ENCODE measurements at regions of chr12 and their contacts with region 1.

Region 1: GRCh38 chr12:27821259-27821973 is 41.4 kb upstream of the MANSC4 start:
- DNase-seq: peak in 4 of 5 donors; percentile 41 to 49 (median 46)
- H3K4me3 ChIP-seq: peak overlapping the region; percentile 9 to 34
- H3K4me3 Mint-ChIP-seq: peak overlapping the region; percentile 71 to 89 (median 83)
- H3K27ac ChIP-seq: no peak overlapping the region
- H3K27ac Mint-ChIP-seq: peak overlapping the region; percentile 67 to 94 (median 84)
- H3K4me1 ChIP-seq: peaks cover 34% of the 10 kb centered on the region
- H3K4me1 Mint-ChIP-seq: peaks cover 23 to 35% (median 29%) of the 10 kb centered on the region in 4 donors
- H3K27me3 ChIP-seq: no peaks in the 10 kb centered on the region
- H3K27me3 Mint-ChIP-seq: no peaks in the 10 kb centered on the region

Region 2: DNA sequence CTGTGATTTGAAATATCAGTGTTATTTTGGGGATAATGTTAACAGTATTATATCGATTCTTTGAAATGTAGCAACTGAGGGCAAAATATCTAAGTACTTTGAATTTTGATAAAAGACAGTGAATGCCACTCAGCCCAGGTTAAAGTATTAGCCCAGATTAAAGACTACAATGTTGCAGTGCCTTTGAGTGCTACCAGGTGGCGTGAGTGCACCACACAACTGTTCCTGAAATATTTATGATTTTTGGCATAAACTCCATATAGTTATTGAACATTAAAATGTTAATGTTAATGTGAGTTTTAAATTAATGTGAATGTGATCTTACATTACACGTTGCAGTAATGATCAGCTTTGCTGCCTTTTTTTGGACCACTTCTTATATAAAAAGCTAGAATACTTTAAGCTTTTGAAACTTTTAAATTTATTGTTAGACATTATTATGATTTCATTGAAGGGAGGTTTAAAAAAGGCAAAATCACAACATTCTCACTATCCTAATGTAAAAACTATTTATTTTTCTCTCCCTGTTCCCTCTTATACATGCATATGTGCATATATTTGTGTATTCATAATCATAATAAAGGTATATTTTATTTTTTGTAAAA is 88.3 kb before region 1 on chr12:
- CTCF ChIA-PET with region 1: interaction called, 63 read pairs
- POLR2A ChIA-PET with region 1: no interaction called
- intact Hi-C with region 1: loop called (anchors 1 kb)
- DNase-seq: peak in 4 of 5 donors; percentile 24 to 42 (median 34)
- H3K4me3 ChIP-seq: no peak overlapping the region
- H3K4me3 Mint-ChIP-seq: no peak overlapping the region
- H3K27ac ChIP-seq: no peak overlapping the region
- H3K27ac Mint-ChIP-seq: no peak overlapping the region
- H3K4me1 ChIP-seq: no peaks in the 10 kb centered on the region
- H3K4me1 Mint-ChIP-seq: peaks cover 0 to 7% (median 0%) of the 10 kb centered on the region in 4 donors
- H3K27me3 ChIP-seq: no peaks in the 10 kb centered on the region
- H3K27me3 Mint-ChIP-seq: no peaks in the 10 kb centered on the region

Region 3: DNA sequence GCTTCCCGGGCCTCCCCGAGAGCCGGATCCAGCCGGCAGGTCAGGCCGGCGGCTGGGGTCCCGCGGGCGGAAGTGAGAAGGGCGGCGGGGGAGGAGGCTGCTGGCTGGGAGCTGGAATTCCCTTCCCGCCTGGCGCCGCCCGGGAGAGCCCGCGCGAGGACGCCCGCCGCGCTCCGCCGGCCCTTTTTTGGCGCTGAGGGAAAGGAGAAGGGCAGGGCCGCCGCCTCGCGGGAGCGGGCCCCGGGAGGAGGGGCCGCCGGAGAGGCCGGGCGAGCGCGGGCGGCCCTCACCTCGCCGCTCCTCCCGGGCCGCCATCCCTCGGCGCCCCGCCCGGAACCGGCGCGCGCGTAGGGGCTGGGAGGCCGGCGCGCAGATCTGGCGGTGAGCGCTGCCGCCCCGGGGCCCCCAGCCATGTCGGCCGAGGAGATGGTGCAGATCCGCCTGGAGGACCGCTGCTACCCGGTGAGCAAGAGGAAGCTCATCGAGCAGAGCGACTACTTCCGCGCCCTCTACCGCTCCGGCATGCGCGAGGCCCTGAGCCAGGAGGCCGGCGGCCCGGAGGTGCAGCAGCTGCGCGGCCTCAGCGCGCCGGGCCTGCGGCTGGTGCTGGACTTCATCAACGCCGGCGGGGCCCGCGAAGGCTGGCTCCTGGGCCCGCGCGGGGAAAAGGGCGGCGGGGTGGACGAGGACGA is 41.4 kb before region 1 on chr12 and contains the starts of genes KLHL42 and MANSC4:
- CTCF ChIA-PET with region 1: interaction called, 12 read pairs
- POLR2A ChIA-PET with region 1: interaction called, 23 read pairs
- intact Hi-C with region 1: loop called (anchors 1 kb)
- DNase-seq: peak; percentile 62 to 75 (median 72)
- H3K4me3 ChIP-seq: peak within 1 kb of the TSS; percentile 73 to 74
- H3K4me3 Mint-ChIP-seq: peak within 1 kb of the TSS; percentile 86 to 94 (median 90)
- H3K27ac ChIP-seq: peak within 1 kb of the TSS; percentile 62
- H3K27ac Mint-ChIP-seq: peak within 1 kb of the TSS; percentile 84 to 97 (median 87)
- H3K4me1 ChIP-seq: peaks cover 26% of the 10 kb centered on the region
- H3K4me1 Mint-ChIP-seq: peaks cover 28 to 40% (median 34%) of the 10 kb centered on the region in 4 donors
- H3K27me3 ChIP-seq: no peaks in the 10 kb centered on the region
- H3K27me3 Mint-ChIP-seq: no peaks in the 10 kb centered on the region
- total RNA-seq, gene KLHL42: 19.4 to 20.5 TPM
- total RNA-seq, gene MANSC4: not detected

Region 4: DNA sequence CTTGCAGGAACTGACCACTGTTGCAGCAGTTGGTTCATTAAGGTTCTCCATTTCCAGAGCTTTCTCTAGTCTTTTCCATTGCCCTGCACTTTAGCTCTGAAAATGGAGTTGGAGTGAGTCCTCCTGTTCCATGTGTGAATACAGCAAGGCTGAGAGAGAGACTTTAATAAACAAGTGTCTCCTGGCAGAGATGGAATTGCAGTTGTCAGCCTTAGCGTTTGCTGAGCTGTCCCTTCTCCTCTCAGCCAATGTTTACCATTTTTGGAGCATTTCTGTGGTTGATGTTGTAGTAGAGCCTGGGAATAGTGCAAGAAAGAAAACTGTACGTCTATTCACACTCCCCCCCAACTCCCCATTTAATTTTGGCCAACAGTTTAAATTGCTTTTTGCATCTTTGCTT is 33.9 kb before region 1 on chr12:
- CTCF ChIA-PET with region 1: interaction called, 12 read pairs
- POLR2A ChIA-PET with region 1: no interaction called
- intact Hi-C with region 1: no loop called
- DNase-seq: no peak
- H3K4me3 ChIP-seq: no peak overlapping the region
- H3K4me3 Mint-ChIP-seq: no peak overlapping the region
- H3K27ac ChIP-seq: no peak overlapping the region
- H3K27ac Mint-ChIP-seq: no peak overlapping the region
- H3K4me1 ChIP-seq: peaks cover under 1% of the 10 kb centered on the region
- H3K4me1 Mint-ChIP-seq: peaks cover 22 to 43% (median 33%) of the 10 kb centered on the region in 4 donors
- H3K27me3 ChIP-seq: no peaks in the 10 kb centered on the region
- H3K27me3 Mint-ChIP-seq: no peaks in the 10 kb centered on the region

Region 5: DNA sequence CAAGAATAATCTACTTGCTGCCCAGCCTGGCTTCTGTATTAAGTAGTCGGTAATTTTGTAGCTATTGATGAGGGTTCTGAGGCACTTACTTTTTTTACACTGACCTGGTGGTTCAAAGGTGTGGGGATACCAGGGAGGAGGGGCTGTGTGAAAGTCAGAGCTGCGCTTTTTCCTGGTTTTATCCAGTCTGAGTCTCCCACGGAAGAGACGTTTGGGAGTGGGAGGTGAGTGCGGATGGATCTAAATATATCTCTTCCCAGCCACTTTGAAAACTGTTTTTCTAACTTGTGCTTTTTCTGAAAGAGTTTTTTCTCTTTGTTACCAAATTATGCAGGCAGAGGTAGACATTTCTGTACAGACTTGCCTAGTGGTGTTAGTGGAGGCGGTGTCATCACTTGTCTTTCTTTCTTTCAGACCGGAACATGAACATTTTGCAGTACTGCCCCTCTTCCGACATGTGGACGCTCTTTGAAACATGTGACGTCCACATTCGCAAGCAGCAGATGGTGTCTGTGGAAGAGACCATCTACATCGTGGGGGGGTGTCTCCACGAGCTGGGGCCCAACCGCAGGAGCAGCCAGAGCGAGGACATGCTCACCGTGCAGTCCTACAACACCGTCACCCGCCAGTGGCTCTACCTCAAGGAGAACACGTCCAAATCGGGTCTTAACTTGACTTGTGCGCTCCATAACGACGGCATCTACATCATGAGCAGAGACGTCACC is 24.0 kb before region 1 on chr12:
- CTCF ChIA-PET with region 1: interaction called, 17 read pairs
- POLR2A ChIA-PET with region 1: no interaction called
- intact Hi-C with region 1: no loop called
- DNase-seq: no peak
- H3K4me3 ChIP-seq: no peak overlapping the region
- H3K4me3 Mint-ChIP-seq: no peak overlapping the region
- H3K27ac ChIP-seq: no peak overlapping the region
- H3K27ac Mint-ChIP-seq: no peak overlapping the region
- H3K4me1 ChIP-seq: peaks cover 9% of the 10 kb centered on the region
- H3K4me1 Mint-ChIP-seq: peaks cover 9 to 25% (median 20%) of the 10 kb centered on the region in 4 donors
- H3K27me3 ChIP-seq: no peaks in the 10 kb centered on the region
- H3K27me3 Mint-ChIP-seq: no peaks in the 10 kb centered on the region

Region 6: GRCh38 chr12:27805238-27805637 is 16.2 kb before region 1 on chr12:
- CTCF ChIA-PET with region 1: interaction called, 17 read pairs
- POLR2A ChIA-PET with region 1: no interaction called
- intact Hi-C with region 1: no loop called
- DNase-seq: no peak
- H3K4me3 ChIP-seq: no peak overlapping the region
- H3K4me3 Mint-ChIP-seq: no peak overlapping the region
- H3K27ac ChIP-seq: no peak overlapping the region
- H3K27ac Mint-ChIP-seq: no peak overlapping the region
- H3K4me1 ChIP-seq: peaks cover 12% of the 10 kb centered on the region
- H3K4me1 Mint-ChIP-seq: peaks cover 14 to 50% (median 34%) of the 10 kb centered on the region in 4 donors
- H3K27me3 ChIP-seq: no peaks in the 10 kb centered on the region
- H3K27me3 Mint-ChIP-seq: peaks cover 0 to 2% of the 10 kb centered on the region in 2 donors

Region 7: DNA sequence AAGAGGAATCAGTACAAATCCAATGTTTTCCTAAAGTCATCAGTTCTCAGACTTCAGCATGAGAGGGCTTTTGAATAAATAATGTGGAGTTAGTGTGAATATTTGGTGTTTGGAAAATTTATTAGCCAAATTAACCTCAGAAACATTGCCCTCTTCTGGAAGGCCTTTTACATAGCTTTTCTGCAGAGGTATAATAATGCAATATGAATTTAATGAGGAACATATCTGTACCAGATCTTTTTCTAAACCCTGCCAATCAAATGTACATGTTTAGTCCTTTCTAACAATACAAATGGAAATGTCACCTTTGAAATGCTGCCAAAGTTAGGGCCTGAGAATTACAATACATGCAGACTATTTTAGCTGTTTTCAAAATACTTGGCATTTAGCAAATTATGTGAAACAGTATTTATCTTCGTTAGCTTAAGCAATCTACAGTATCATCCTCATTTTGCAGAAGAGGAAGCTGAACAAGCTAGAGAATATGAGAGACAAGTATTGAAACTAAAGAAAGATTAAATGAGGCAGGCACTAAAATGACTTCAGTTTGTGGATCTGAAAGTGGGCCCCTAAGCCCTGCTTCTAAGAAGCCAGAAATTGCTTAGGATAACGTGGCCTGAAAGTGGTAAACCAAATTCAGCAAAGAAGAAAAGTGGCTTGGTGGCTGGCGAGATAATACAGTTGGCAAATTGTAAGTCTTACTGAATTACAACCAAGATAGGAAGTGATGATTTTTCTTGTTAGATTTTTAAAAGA is 19.0 kb after region 1 on chr12:
- CTCF ChIA-PET with region 1: no interaction called
- POLR2A ChIA-PET with region 1: no interaction called
- intact Hi-C with region 1: no loop called
- DNase-seq: no peak
- H3K4me3 ChIP-seq: no peak overlapping the region
- H3K4me3 Mint-ChIP-seq: no peak overlapping the region
- H3K27ac ChIP-seq: no peak overlapping the region
- H3K27ac Mint-ChIP-seq: no peak overlapping the region
- H3K4me1 ChIP-seq: no peaks in the 10 kb centered on the region
- H3K4me1 Mint-ChIP-seq: peaks cover 0 to 2% (median 0%) of the 10 kb centered on the region in 4 donors
- H3K27me3 ChIP-seq: no peaks in the 10 kb centered on the region
- H3K27me3 Mint-ChIP-seq: no peaks in the 10 kb centered on the region

Region 8: GRCh38 chr12:27879708-27880107 is 58.3 kb after region 1 on chr12:
- CTCF ChIA-PET with region 1: no interaction called
- POLR2A ChIA-PET with region 1: no interaction called
- intact Hi-C with region 1: no loop called
- DNase-seq: no peak
- H3K4me3 ChIP-seq: no peak overlapping the region
- H3K4me3 Mint-ChIP-seq: no peak overlapping the region
- H3K27ac ChIP-seq: no peak overlapping the region
- H3K27ac Mint-ChIP-seq: no peak overlapping the region
- H3K4me1 ChIP-seq: no peaks in the 10 kb centered on the region
- H3K4me1 Mint-ChIP-seq: no peaks in the 10 kb centered on the region
- H3K27me3 ChIP-seq: no peaks in the 10 kb centered on the region
- H3K27me3 Mint-ChIP-seq: no peaks in the 10 kb centered on the region

Region 9: DNA sequence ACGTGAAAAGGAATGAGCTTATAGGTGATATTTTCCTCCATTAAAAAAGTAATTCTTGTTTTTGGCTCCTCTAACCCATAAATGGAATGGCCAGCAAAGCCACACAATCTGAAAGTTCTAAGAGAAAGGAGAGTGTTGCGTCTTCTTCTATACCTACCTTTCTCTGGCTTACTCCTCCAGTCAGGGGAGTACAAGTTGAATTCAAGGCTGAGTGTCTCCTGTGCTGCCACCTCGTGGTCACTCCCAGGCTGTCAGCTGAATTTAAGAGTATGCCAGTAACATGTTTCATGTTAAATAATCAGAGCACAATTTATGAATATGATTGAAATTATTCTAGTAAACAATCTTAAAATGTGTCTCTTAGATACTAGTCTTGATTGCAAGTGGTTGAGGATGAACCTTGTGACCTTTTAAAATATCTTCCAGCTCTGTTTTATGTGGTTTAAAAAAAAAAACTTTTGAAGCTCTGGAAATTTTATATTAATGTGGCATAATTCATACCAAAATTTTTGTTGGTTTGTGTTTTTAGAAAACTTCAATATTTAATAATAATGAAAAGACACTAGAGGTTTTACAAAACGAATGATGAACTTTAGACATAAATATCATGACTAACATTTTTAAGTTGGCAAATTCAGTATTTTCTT is 119.5 kb after region 1 on chr12:
- CTCF ChIA-PET with region 1: interaction called, 4 read pairs
- POLR2A ChIA-PET with region 1: no interaction called
- intact Hi-C with region 1: loop called (anchors 1 kb)
- DNase-seq: peak; percentile 54 to 64 (median 55)
- H3K4me3 ChIP-seq: no peak overlapping the region
- H3K4me3 Mint-ChIP-seq: no peak overlapping the region
- H3K27ac ChIP-seq: no peak overlapping the region
- H3K27ac Mint-ChIP-seq: no peak overlapping the region
- H3K4me1 ChIP-seq: no peaks in the 10 kb centered on the region
- H3K4me1 Mint-ChIP-seq: peaks cover 0 to 2% (median 0%) of the 10 kb centered on the region in 4 donors
- H3K27me3 ChIP-seq: no peaks in the 10 kb centered on the region
- H3K27me3 Mint-ChIP-seq: peaks cover 3 to 4% of the 10 kb centered on the region in 2 donors

Measured in CD4-positive, alpha-beta memory T cell (primary cell).